ENCODE measurements at regions of chr2 and their contacts with region 1.

Region 1: DNA sequence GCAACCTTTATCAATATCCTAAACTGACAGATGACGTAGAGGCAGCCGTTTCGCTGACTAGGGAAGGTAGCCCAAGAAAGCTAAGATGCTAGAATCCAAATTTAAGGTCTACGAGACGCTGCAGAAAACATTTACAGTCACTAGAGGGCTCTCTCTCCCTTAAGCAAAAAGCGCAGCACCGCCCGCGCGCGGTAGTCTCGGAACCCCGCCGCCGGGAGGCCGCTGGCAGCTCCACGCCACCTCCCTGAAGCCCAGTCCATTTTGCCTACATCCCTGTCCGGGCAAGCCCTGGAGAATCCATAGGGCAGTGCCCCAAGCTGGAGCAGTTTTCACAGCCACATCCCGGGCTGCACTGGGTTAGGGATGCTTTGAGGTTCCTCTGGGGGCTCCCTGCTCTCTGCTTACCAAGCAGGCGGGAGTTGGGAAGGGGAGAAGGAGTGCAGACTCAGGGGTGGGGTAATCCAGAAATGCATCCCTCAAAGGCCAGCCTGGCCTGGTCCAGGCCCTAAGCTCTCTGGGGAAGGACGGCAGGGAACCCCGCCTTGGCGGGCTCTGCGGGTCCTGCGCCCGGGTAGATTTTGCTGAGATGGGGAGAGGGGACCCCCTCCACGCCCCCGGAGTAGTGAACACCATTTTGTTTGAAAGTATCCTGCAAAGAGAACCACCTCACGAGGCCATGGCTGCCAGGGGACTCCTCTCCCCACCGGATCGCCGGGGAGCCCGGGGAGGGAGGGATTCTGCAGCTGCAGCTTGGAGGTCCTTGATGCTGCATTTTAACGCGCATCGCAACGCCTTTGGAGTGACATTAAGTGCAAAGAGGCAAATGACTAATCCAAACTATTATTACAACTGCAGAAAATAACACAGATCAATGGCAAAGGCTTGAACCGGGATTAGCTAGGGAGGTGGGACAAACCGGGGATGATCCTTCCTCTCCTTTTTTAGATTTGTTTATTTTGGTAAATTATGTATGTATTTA is 1.3 kb upstream of the DPYSL5 start:
- DNase-seq: peak; percentile 32 to 80 (median 49)
- ATAC-seq: peak; percentile 75
- H3K4me3 ChIP-seq: no peak overlapping the region
- H3K4me3 Mint-ChIP-seq: peak overlapping the region; percentile 87
- H3K27ac ChIP-seq: no peak overlapping the region
- H3K27ac Mint-ChIP-seq: no peak overlapping the region
- H3K4me1 ChIP-seq: peaks cover 36% of the 10 kb centered on the region
- H3K4me1 Mint-ChIP-seq: peaks cover 23% of the 10 kb centered on the region
- H3K27me3 ChIP-seq: peaks cover 46 to 69% of the 10 kb centered on the region in 2 experiments
- H3K27me3 Mint-ChIP-seq: peaks cover 71% of the 10 kb centered on the region
- CTCF ChIP-seq: peak; percentile 81

Region 2: DNA sequence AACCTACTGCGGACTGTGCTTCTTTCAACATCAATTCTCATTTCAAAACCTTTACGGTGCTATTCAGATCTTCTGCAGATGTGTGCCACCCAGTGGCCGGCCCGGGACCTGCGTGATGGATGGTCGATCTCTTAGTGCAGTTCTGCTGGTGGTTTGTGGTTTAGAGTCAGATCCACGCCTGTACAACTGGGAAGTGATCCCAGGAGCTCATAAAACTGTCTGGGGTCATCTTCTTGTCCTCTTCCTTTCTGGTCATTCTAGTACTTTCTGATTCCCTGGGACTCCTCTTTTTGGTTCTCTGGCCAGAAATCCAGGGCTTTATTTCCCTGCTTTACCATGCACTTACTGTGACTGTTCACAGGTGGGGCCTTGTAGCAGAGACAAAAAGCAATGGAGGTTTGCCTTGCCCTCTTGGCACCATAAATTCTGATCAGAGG is 516.5 kb before region 1 on chr2:
- CTCF ChIA-PET with region 1: no interaction called
- POLR2A ChIA-PET with region 1: no interaction called
- intact Hi-C with region 1: no loop called
- DNase-seq: peak; percentile 70 to 86 (median 80)
- ATAC-seq: peak; percentile 99
- H3K4me3 ChIP-seq: no peak overlapping the region
- H3K4me3 Mint-ChIP-seq: no peak overlapping the region
- H3K27ac ChIP-seq: no peak overlapping the region
- H3K27ac Mint-ChIP-seq: no peak overlapping the region
- H3K4me1 ChIP-seq: peaks cover 6% of the 10 kb centered on the region
- H3K4me1 Mint-ChIP-seq: peaks cover 11% of the 10 kb centered on the region
- H3K27me3 ChIP-seq: no peaks in the 10 kb centered on the region
- H3K27me3 Mint-ChIP-seq: no peaks in the 10 kb centered on the region
- CTCF ChIP-seq: peak; percentile 95

Region 3: GRCh38 chr2:26442707-26443106 is 403.9 kb before region 1 on chr2:
- CTCF ChIA-PET with region 1: no interaction called
- POLR2A ChIA-PET with region 1: no interaction called
- intact Hi-C with region 1: no loop called
- DNase-seq: no peak
- ATAC-seq: no peak
- H3K4me3 ChIP-seq: no peak overlapping the region
- H3K4me3 Mint-ChIP-seq: no peak overlapping the region
- H3K27ac ChIP-seq: no peak overlapping the region
- H3K27ac Mint-ChIP-seq: no peak overlapping the region
- H3K4me1 ChIP-seq: no peaks in the 10 kb centered on the region
- H3K4me1 Mint-ChIP-seq: no peaks in the 10 kb centered on the region
- H3K27me3 ChIP-seq: no peaks in the 10 kb centered on the region
- H3K27me3 Mint-ChIP-seq: peaks cover 5% of the 10 kb centered on the region
- CTCF ChIP-seq: no peak

Region 4: GRCh38 chr2:26860211-26860850 is 13.7 kb after region 1 on chr2:
- CTCF ChIA-PET with region 1: interaction called, 10 read pairs
- POLR2A ChIA-PET with region 1: no interaction called
- intact Hi-C with region 1: no loop called
- DNase-seq: no peak
- ATAC-seq: no peak
- H3K4me3 ChIP-seq: no peak overlapping the region
- H3K4me3 Mint-ChIP-seq: no peak overlapping the region
- H3K27ac ChIP-seq: no peak overlapping the region
- H3K27ac Mint-ChIP-seq: no peak overlapping the region
- H3K4me1 ChIP-seq: no peaks in the 10 kb centered on the region
- H3K4me1 Mint-ChIP-seq: no peaks in the 10 kb centered on the region
- H3K27me3 ChIP-seq: peaks cover 8 to 24% of the 10 kb centered on the region in 2 experiments
- H3K27me3 Mint-ChIP-seq: peaks cover 59% of the 10 kb centered on the region
- CTCF ChIP-seq: no peak

Region 5: DNA sequence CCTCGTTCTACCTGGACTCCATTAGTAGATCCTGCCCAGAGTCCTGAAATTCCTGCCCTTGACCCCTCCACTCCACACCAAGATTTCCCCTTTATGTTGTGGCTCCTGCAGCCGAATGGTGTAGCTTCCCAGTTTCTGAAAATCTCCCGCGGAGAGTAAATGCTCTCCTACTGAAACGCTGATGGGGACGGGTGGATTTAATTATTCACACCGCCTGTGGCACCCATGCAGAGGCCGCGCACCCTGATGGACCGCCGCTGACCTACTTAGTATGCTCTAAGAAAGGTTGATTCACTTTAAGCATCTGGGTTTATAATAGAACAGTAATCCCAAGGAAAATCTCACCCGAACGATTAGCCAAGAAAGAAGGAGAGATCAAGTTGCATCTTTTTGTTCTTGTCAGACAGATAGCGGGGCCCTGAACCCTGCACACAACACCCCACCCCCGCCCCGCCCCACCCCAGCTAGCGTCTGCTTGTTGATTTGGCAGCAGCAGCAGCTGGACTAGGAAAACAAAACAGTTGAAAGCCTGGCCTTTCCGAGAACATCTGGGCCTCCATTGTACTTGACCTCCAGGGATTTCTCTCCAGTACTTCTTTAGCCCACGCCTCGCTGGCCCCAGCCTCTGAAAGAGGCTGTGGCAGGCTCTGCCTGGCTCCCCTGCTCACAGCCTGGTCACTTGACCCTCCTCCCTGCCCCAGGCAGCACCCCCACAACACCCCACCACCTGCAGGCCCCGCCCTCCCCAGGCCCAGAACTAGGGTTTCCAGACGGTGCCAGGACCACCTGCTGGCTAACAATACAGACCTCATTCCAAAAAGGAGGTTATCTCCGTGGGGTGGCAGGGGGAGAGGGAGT is 54.9 kb after region 1 on chr2:
- CTCF ChIA-PET with region 1: no interaction called
- POLR2A ChIA-PET with region 1: no interaction called
- intact Hi-C with region 1: no loop called
- DNase-seq: no peak
- ATAC-seq: no peak
- H3K4me3 ChIP-seq: no peak overlapping the region
- H3K4me3 Mint-ChIP-seq: no peak overlapping the region
- H3K27ac ChIP-seq: no peak overlapping the region
- H3K27ac Mint-ChIP-seq: no peak overlapping the region
- H3K4me1 ChIP-seq: no peaks in the 10 kb centered on the region
- H3K4me1 Mint-ChIP-seq: no peaks in the 10 kb centered on the region
- H3K27me3 ChIP-seq: no peaks in the 10 kb centered on the region
- H3K27me3 Mint-ChIP-seq: no peaks in the 10 kb centered on the region
- CTCF ChIP-seq: no peak

Region 6: DNA sequence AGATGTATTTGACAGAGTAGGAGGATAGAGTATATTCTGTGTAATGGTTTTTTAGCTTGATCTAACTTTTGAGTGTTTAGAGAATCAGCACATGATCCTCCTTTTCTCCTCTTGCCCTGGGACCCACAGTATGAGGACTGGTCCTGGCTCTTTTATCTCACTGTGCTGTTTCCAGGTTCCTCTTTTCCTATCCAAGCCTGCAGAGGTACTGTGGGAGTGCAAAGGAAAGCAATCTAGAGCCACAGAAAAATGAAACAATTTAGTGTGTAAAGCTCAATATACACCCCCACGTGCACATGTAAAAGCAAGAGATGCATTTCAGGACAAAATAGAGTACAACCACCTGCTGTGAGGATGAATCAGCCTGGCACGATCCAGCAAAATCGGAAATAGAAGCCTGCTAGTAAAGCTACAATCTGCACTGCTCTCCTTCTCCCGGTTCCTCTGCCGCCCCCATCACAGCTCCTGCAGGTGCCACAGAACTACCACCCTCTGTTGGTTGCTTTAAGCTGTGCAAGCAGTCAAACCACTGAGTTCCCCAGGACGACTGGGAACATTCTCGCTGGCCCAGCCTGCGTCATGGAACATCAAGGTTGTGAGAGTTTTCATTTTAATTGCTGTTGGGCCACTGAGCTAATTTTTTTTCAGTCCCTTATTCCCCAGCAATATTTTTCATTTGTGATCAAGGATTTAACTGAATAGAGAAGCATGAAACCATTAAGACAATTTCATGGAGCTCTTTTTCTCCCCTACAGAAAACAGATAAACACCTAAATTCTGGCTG is 76.0 kb after region 1 on chr2:
- CTCF ChIA-PET with region 1: interaction called, 15 read pairs
- POLR2A ChIA-PET with region 1: interaction called, 4 read pairs
- intact Hi-C with region 1: loop called (anchors 1 kb)
- DNase-seq: peak in 13 of 14 experiments; percentile 10 to 61 (median 22)
- ATAC-seq: peak; percentile 85
- H3K4me3 ChIP-seq: no peak overlapping the region
- H3K4me3 Mint-ChIP-seq: no peak overlapping the region
- H3K27ac ChIP-seq: no peak overlapping the region
- H3K27ac Mint-ChIP-seq: no peak overlapping the region
- H3K4me1 ChIP-seq: peaks cover 6% of the 10 kb centered on the region
- H3K4me1 Mint-ChIP-seq: peaks cover 9% of the 10 kb centered on the region
- H3K27me3 ChIP-seq: peaks cover 3 to 19% of the 10 kb centered on the region in 2 experiments
- H3K27me3 Mint-ChIP-seq: peaks cover 24% of the 10 kb centered on the region
- CTCF ChIP-seq: peak; percentile 42

Region 7: GRCh38 chr2:26942543-26943295 is 96.1 kb after region 1 on chr2:
- CTCF ChIA-PET with region 1: interaction called, 12 read pairs
- POLR2A ChIA-PET with region 1: interaction called, 3 read pairs
- intact Hi-C with region 1: loop called (anchors 1 kb)
- DNase-seq: peak; percentile 35 to 76 (median 50)
- ATAC-seq: peak; percentile 52
- H3K4me3 ChIP-seq: no peak overlapping the region
- H3K4me3 Mint-ChIP-seq: no peak overlapping the region
- H3K27ac ChIP-seq: no peak overlapping the region
- H3K27ac Mint-ChIP-seq: no peak overlapping the region
- H3K4me1 ChIP-seq: peaks cover 6% of the 10 kb centered on the region
- H3K4me1 Mint-ChIP-seq: no peaks in the 10 kb centered on the region
- H3K27me3 ChIP-seq: no peaks in the 10 kb centered on the region
- H3K27me3 Mint-ChIP-seq: peaks cover 19% of the 10 kb centered on the region
- CTCF ChIP-seq: peak; percentile 91

Region 8: GRCh38 chr2:27016801-27017325 is 170.2 kb after region 1 on chr2:
- CTCF ChIA-PET with region 1: interaction called, 3 read pairs
- POLR2A ChIA-PET with region 1: no interaction called
- intact Hi-C with region 1: loop called in 1 of 2 experiments (anchors 2 kb)
- DNase-seq: peak in 13 of 14 experiments; percentile 15 to 69 (median 29)
- ATAC-seq: no peak
- H3K4me3 ChIP-seq: no peak overlapping the region
- H3K4me3 Mint-ChIP-seq: no peak overlapping the region
- H3K27ac ChIP-seq: no peak overlapping the region
- H3K27ac Mint-ChIP-seq: no peak overlapping the region
- H3K4me1 ChIP-seq: no peaks in the 10 kb centered on the region
- H3K4me1 Mint-ChIP-seq: no peaks in the 10 kb centered on the region
- H3K27me3 ChIP-seq: no peaks in the 10 kb centered on the region
- H3K27me3 Mint-ChIP-seq: no peaks in the 10 kb centered on the region
- CTCF ChIP-seq: peak; percentile 66